ENCODE measurements at regions of chr2 and their contacts with region 1.

Region 1: GRCh38 chr2:120109186-120110061 is 96.5 kb downstream of the EPB41L5 start:
- DNase-seq: no peak
- ATAC-seq: peak; percentile 55

Region 2: DNA sequence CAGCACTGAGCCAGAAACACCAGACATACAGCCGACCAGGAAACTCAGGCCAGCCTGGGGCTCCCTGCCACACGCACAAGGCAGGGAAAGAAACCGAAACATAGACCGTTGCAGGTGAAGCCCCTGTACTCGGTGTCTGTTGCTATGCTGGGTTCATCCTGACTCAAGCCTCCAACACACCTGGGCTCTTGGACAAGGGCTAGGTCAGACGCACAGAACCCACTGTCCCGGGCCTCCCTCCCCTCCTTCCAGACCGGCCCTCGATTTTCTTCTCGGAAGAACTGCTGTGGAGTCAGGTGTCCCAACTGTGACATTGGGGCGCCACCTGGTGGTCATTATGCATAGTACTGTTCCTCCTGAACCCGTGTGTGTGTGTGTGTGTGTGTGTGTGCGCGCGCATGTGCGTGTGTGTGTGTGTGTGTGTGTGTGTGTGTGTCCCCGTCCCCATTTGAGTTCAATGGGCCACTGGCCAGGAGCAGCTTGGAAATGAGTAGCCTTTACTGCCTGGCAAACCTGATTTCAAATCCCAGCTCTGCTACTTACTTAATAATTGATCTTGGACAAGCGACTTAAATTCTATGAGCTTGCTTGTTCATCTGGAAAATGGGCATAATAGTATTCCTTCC is 570.8 kb after region 1 on chr2:
- intact Hi-C with region 1: loop called (anchors 10 kb)
- DNase-seq: peak; percentile 86
- ATAC-seq: peak; percentile 81